Activated naive CD4-positive, alpha-beta T cell treated with anti-CD3 and anti-CD28 coated beads, Interleukin-2, amount 10 ng/mL, durations not matched to agents 7 days and 5 days (primary cell): ENCODE measurements at regions of chr1 and their contacts with region 1.

Region 1: GRCh38 chr1:155989242-155990004 is 11.1 kb upstream of the ARHGEF2 start:
- DNase-seq: peak; percentile 88
- H3K4me3 Mint-ChIP-seq: no peak overlapping the region
- H3K27ac Mint-ChIP-seq: no peak overlapping the region
- H3K4me1 Mint-ChIP-seq: peaks cover 20% of the 10 kb centered on the region
- H3K27me3 Mint-ChIP-seq: peaks cover 6% of the 10 kb centered on the region

Region 2: DNA sequence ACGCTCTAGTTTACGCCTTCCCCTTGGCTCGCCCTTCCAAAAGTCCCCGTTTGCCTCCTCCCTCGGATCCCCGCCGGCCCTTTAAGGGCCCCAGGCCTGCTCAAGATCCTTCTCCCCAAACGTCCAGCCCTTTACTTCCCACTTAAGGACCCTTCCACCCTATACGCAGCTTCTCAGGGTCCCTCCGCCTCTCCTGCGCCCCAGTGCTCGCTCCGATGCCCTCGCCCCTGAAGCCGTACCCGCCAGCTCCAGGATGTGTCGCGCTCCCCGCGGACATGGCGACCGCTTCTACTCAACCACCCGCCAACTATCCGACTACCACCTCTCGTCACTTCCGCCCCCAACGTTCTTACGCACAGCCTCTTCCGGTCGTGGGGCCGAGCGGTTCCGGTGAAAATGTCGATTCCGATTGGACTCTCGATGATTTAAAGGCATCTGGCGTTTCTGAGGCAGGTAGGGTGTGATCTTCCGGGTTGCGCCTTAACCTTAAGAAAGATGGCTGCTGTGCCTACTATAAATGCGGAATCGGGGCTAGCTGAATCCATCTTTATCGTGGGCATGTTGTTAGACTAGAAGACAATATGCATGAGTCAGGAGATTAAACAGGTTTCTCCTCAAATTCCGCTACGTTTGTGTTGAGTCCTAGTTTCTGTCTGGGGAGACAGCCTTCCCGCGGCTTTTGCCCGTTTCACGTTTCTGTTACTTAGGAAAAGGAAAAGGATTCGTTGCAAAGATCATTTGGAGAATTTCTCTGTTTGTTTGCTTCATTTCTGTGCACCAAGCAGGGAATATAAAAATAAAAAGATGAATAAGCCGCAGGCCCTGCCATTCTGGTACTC is 55.1 kb before region 1 on chr1 and contains the start of gene KHDC4:
- CTCF ChIA-PET with region 1: interaction called, 130 read pairs
- DNase-seq: peak; percentile 97
- H3K4me3 Mint-ChIP-seq: no peak within 1 kb of the TSS
- H3K27ac Mint-ChIP-seq: peak within 1 kb of the TSS; percentile 68
- H3K4me1 Mint-ChIP-seq: peaks cover 50% of the 10 kb centered on the region
- H3K27me3 Mint-ChIP-seq: no peaks in the 10 kb centered on the region

Region 3: DNA sequence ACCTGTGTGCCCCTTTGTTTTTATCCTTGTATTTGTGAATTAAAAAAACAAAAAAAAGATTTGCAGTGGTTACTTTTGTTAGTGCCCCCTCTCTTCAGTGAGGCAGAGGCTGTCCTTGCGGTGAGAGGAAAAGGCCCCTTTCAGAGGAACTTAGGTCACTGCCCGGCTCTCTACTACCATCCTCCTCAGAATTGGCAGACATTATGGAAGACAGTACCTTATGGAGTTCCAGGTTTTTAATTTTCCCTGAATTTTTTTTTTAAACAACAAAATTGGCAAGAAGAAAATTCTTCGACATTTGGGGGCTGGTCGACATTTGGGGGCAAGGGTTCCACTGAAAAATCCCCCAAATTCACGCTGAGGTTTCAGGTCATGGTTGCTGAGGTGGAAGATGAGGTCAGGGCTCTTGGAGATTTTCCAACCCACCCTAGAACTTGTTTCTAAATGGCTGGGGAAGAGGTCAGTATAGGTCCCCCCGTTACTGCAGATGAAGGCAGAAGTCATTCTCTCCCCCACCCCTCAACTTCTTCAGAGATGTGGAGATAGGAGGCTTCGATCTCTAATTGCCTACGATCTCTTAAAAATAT is 42.7 kb before region 1 on chr1:
- CTCF ChIA-PET with region 1: interaction called, 32 read pairs
- DNase-seq: no peak
- H3K4me3 Mint-ChIP-seq: no peak overlapping the region
- H3K27ac Mint-ChIP-seq: peak overlapping the region; percentile 88
- H3K4me1 Mint-ChIP-seq: peaks cover 55% of the 10 kb centered on the region
- H3K27me3 Mint-ChIP-seq: no peaks in the 10 kb centered on the region

Region 4: GRCh38 chr1:155967341-155968050 is 21.9 kb before region 1 on chr1:
- CTCF ChIA-PET with region 1: interaction called, 22 read pairs
- DNase-seq: peak; percentile 60
- H3K4me3 Mint-ChIP-seq: peak overlapping the region; percentile 63
- H3K27ac Mint-ChIP-seq: peak overlapping the region; percentile 89
- H3K4me1 Mint-ChIP-seq: peaks cover 77% of the 10 kb centered on the region
- H3K27me3 Mint-ChIP-seq: no peaks in the 10 kb centered on the region

Region 5: DNA sequence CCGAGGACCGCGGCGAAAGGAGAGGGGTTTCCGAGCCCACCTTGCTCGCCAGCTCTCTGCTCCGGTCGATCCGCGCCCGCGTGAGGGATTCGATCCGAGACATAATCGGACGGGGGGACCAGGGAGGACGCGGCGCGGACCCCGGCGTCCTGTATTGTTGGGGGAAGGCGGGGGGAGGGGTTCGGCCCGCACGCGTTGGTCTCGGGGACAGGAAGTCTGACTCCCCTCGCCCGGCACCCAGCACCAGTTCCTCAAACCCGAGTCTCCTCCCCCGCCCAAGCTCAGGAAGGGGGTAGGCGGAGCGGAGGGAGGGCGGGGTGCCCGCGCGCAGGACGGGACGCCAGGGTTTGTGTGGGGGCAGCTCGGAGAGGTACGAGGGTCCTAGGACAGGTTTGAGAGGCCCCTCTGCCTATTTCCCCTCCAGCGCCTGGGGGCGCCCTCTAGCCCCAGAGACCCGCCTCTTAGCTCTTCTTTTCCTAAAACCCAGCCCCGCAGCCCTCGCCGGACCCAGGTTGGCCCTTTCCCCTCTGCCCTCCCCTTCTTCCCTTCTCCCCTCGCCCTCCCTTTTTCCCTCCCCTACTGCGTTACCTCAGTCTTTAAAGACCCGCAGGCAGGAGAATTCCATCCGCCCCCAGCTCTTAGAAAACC is 11.0 kb before region 1 on chr1 and contains the start of gene ARHGEF2:
- CTCF ChIA-PET with region 1: interaction called, 39 read pairs
- DNase-seq: peak; percentile 89
- H3K4me3 Mint-ChIP-seq: peak within 1 kb of the TSS; percentile 100
- H3K27ac Mint-ChIP-seq: peak within 1 kb of the TSS; percentile 89
- H3K4me1 Mint-ChIP-seq: peaks cover 69% of the 10 kb centered on the region
- H3K27me3 Mint-ChIP-seq: no peaks in the 10 kb centered on the region

Region 6: GRCh38 chr1:156004843-156005593 is 15.6 kb after region 1 on chr1:
- CTCF ChIA-PET with region 1: interaction called, 11 read pairs
- DNase-seq: peak; percentile 49
- H3K4me3 Mint-ChIP-seq: peak overlapping the region; percentile 38
- H3K27ac Mint-ChIP-seq: peak overlapping the region; percentile 86
- H3K4me1 Mint-ChIP-seq: peaks cover 40% of the 10 kb centered on the region
- H3K27me3 Mint-ChIP-seq: peaks cover 17% of the 10 kb centered on the region

Region 7: DNA sequence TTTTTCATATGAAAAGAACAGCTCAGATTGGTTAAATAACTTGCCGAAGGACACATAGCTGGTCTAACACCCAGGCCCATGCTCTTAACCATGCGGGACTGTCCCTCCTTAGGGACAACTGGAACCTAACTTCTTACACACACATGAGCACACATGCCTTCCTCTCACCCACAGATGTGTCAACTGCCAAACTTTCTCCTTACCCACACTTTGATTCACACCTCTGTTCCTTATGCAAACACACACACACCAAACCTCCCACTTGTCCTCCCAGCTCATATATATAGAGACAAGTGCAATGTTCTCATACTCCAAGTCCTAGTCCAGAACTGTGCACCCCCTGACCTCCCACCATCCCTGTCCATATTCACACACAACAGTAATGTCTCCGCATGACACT is 75.8 kb after region 1 on chr1:
- CTCF ChIA-PET with region 1: interaction called, 25 read pairs
- DNase-seq: no peak
- H3K4me3 Mint-ChIP-seq: no peak overlapping the region
- H3K27ac Mint-ChIP-seq: no peak overlapping the region
- H3K4me1 Mint-ChIP-seq: peaks cover 8% of the 10 kb centered on the region
- H3K27me3 Mint-ChIP-seq: peaks cover 12% of the 10 kb centered on the region